Activated naive CD4-positive, alpha-beta T cell treated with anti-CD3 and anti-CD28 coated beads for 36 hours (primary cell): ENCODE measurements at regions of chr14 and their contacts with region 1.

Region 1: DNA sequence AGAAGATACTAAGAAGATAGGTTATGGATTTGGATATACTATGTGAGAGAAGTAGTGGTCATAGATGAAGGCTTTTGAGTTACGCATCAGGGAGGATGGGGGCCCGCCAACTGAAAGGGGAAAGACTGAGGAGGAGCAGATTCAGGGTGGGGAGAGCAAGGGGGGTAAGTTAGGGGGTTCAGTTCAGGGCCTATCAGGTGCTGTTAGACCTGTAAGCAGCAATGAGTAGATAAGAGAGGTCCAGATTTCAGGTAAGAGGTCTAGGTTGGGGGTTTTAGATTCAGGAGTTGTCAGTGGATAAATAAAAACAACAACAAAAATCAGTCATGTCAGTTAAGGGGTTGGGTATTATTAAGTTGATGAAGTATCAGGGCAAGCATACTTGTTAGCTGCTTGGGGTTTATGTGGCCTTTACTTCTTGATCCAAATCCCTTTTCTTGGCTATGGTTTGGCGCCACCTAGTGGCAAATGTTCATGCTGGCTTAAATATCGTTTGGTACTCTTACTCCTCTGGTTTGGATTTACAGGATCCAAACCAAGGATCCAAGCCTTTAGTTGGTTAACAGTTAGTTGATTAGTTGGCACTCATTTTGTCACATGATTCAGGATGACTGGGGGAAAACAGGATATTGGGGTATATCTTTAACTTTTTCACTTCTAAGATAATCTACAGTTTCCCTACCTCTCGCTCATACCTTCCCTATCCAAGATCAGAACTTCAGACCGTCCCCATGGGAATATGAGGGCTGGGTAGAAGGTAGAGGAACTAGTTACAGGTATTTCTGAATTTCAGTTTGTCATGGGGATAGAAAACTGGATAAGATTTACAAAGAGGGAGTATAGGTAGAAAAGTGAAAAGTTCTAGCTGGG is 65.1 kb downstream of the PCNX1 start:
- DNase-seq: peak; percentile 95
- H3K4me3 Mint-ChIP-seq: no peak overlapping the region
- H3K27ac Mint-ChIP-seq: peak overlapping the region; percentile 33
- H3K4me1 Mint-ChIP-seq: peaks cover 30% of the 10 kb centered on the region
- H3K27me3 Mint-ChIP-seq: no peaks in the 10 kb centered on the region

Region 2: DNA sequence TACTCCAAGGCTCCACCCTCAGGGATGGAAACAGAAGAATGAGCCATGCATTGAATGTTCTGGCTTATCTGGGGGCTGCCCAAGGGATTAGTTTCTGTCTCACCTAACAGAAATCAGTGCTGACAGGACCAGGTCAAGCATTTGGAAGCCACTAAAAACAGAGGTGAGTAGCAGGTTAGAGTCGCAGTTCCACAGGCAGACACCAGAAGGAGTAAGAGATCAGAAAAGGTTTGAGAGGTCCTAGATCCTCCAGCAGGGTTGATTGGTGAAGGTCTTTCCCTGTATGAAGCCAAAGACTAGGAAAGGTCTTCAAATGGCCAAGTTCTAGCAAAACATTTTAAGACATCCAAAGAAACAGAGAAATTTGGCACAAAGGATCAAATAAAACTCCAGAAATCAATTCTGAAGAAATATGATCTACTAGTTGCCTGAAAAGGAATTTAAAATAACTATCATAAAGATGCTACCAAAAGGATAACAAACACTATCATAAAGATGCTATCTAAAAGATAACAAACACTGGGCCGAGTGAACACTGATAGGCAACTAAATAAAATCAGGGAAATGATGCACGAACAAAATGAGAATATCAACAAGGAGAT is 350.1 kb before region 1 on chr14:
- CTCF ChIA-PET with region 1: no interaction called
- intact Hi-C with region 1: loop called (anchors 5 kb)
- DNase-seq: peak; percentile 72
- H3K4me3 Mint-ChIP-seq: no peak overlapping the region
- H3K27ac Mint-ChIP-seq: no peak overlapping the region
- H3K4me1 Mint-ChIP-seq: no peaks in the 10 kb centered on the region
- H3K27me3 Mint-ChIP-seq: no peaks in the 10 kb centered on the region

Region 3: GRCh38 chr14:70714055-70714621 is 258.2 kb before region 1 on chr14:
- CTCF ChIA-PET with region 1: no interaction called
- intact Hi-C with region 1: loop called (anchors 10 kb)
- DNase-seq: peak; percentile 71
- H3K4me3 Mint-ChIP-seq: no peak overlapping the region
- H3K27ac Mint-ChIP-seq: no peak overlapping the region
- H3K4me1 Mint-ChIP-seq: peaks cover 2% of the 10 kb centered on the region
- H3K27me3 Mint-ChIP-seq: no peaks in the 10 kb centered on the region

Region 4: DNA sequence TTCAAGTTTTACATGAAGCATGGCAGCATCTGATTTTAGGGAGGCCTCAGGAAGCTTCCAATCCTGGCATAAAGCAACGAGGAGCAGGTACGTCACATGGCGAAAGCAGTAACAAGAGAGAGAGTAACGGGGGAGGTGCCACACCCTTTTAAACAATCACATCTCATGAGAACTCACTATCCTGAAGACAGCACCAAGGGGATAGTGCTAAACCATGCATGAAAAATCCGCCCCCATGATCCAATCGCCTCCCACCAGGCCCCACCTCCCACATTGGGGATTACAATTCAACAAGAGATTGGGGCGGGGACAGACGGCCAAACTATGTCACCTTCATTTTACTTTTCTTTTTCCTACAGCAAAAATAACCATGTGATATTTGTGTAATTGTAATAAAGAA is 155.8 kb before region 1 on chr14:
- CTCF ChIA-PET with region 1: interaction called, 21 read pairs
- intact Hi-C with region 1: loop called (anchors 1 kb)
- DNase-seq: no peak
- H3K4me3 Mint-ChIP-seq: no peak overlapping the region
- H3K27ac Mint-ChIP-seq: no peak overlapping the region
- H3K4me1 Mint-ChIP-seq: peaks cover 15% of the 10 kb centered on the region
- H3K27me3 Mint-ChIP-seq: peaks cover 16% of the 10 kb centered on the region

Region 5: DNA sequence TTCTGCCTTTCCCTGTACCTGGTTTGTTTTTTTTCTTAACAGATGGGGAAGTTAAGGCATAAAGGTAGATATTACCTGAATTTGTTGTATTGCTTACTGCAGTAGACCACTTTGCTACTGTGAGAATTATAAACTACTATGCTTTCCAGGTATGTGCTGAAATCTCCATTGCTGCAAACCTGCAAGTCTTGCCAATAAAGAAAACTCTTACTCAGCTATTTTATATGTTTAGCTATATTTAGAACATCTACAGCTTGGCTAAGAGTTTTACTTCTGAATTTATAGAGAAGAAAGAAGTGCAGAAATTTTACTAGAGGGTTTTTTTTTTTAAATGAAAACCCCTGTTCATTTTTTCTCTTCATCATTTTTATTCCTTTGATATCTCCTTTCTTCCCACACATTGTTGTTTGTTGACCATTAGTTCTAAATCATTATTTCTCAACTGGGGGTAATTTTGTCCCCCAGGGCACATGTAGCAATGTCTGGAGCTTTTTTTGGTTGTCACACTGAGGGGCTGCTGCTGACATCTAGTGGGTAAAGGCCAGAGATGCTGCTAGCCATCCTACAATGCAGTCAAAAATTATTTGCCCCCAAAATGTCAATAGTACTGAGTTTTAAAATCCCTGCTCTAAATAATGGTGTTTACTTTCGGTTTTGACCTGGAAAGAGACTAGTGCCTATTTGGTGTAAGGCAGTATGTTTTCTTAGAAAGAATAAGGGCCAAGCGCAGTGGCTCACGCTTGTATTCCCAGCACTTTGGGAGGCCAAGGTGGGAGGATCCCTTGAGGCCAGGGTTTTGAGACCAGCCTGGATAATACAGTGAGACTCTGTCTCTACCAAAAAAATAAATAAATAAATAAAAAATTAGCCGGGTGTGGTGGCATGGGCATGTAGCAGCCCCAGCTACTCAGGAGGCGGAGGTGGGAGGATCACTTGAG is 16.5 kb before region 1 on chr14:
- CTCF ChIA-PET with region 1: interaction called, 8 read pairs
- intact Hi-C with region 1: loop called (anchors 1 kb)
- DNase-seq: peak; percentile 58
- H3K4me3 Mint-ChIP-seq: no peak overlapping the region
- H3K27ac Mint-ChIP-seq: no peak overlapping the region
- H3K4me1 Mint-ChIP-seq: peaks cover 33% of the 10 kb centered on the region
- H3K27me3 Mint-ChIP-seq: no peaks in the 10 kb centered on the region

Region 6: GRCh38 chr14:71011479-71011878 is 39.1 kb after region 1 on chr14:
- CTCF ChIA-PET with region 1: no interaction called
- intact Hi-C with region 1: loop called (anchors 5 kb)
- DNase-seq: no peak
- H3K4me3 Mint-ChIP-seq: no peak overlapping the region
- H3K27ac Mint-ChIP-seq: no peak overlapping the region
- H3K4me1 Mint-ChIP-seq: peaks cover 31% of the 10 kb centered on the region
- H3K27me3 Mint-ChIP-seq: no peaks in the 10 kb centered on the region

Region 7: DNA sequence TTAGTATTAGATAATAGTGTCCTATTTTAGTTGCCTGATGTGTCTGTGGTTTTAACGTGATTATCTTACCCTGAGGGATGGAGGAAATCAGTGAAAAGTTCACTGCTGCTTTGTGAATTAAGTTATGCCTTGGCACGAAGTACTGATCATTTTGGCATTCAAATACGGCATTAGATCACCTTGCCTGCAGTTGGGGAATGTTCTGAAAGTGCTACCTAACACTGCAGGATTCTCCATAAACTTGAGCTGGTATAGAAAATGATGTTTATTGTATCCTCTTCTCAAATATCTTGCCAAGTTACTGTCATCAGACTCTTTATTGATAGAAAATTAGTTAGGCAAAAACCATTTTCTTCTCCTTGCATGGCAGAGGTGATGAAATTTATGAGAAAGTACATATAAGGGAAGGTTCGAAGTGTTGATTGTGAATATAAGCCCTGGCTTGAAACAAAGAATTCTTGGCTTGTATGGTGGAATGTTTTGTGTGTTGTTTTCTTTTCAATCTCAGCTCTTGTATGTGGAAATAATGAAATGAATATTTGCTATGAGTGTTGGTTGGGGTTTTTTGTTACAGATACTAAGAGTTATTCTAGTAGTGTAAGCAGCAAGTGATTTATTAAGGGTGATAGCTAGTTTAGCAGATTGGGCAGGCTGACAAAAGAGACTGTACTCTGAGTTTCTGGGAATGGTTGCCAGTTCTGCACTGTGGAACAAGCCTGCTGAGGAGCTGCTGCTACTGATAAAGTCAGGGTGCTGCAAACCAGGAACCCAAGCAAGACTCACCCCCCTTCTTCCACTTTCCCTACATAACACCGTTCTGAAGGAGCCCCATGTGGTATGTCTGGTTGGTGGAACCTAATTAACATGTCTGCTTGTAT is 383.2 kb after region 1 on chr14:
- CTCF ChIA-PET with region 1: no interaction called
- intact Hi-C with region 1: no loop called
- DNase-seq: no peak
- H3K4me3 Mint-ChIP-seq: no peak overlapping the region
- H3K27ac Mint-ChIP-seq: no peak overlapping the region
- H3K4me1 Mint-ChIP-seq: peaks cover 34% of the 10 kb centered on the region
- H3K27me3 Mint-ChIP-seq: no peaks in the 10 kb centered on the region

Region 8: DNA sequence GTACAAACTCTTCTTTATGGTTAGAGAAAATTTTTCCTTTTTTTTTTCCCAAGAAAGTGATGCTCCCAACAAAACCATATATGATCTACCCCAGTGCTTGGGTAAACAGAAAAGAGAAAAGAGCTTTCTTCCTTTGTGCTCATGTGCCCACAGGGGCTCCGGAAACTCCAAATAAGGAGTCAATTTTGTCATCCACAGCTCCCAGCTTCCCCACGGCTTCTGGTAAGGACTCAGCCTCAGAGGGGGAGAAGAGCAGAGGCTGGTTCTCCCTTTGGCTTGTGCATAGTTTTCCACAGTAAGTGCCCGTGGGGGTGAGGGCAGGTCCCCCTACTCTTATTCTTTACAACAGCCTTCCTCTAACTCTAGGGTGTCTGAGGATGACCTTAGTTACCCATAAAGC is 946.6 kb after region 1 on chr14:
- CTCF ChIA-PET with region 1: no interaction called
- intact Hi-C with region 1: no loop called
- DNase-seq: no peak
- H3K4me3 Mint-ChIP-seq: no peak overlapping the region
- H3K27ac Mint-ChIP-seq: no peak overlapping the region
- H3K4me1 Mint-ChIP-seq: no peaks in the 10 kb centered on the region
- H3K27me3 Mint-ChIP-seq: peaks cover 18% of the 10 kb centered on the region